Calu3 (cell line): ENCODE measurements at regions of chr17 and their contacts with region 1.

Region 1: DNA sequence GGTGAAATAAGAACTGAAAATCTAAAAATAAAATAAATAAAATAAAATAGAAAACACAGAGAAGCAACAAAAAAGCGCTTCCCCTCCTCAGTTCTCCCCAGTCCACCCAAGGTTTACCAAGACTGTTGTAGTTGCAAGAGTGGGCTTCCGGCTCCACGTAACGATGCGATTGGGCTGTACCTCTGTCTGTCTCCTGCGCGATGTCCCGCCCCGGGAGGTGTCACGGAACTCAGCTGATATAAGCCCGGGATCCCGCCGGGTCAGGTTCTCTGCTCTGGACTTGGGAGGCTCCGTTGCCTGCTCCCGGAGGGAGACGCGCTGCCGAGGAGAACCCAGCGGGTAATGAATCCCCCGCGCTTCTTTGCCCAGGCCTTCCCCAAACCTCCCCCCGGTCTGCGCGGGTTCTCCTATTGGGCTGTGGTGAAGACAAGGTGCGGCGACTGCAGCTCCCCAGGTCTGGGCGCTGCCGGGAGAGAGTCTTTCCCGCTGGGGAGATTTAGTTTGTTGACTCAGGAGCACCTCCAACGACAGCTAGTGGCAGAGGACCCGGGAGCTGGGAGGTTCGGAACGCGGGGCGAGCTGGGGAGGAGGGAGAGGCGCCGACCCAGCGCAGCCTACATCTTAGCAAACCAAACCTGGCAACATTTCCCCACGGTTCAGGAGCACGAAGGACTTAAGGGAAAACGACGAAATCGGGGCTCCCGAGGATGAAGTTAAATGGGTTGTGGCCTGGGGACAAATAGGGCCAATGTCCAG is at the start of gene SLFN5:
- DNase-seq: peak; percentile 95
- H3K4me3 Mint-ChIP-seq: peak within 1 kb of the TSS; percentile 91
- H3K27ac Mint-ChIP-seq: peak within 1 kb of the TSS; percentile 99
- H3K4me1 Mint-ChIP-seq: peaks cover 21% of the 10 kb centered on the region
- H3K27me3 Mint-ChIP-seq: no peaks in the 10 kb centered on the region
- CTCF ChIP-seq: no peak
- total RNA-seq, gene SLFN5: 104 and 141 TPM in 2 replicates

Region 2: GRCh38 chr17:35141681-35142466 is 101.1 kb before region 1 on chr17 and contains the start of gene NLE1:
- CTCF ChIA-PET with region 1: no interaction called
- intact Hi-C with region 1: loop called (anchors 5 kb)
- DNase-seq: peak; percentile 91
- H3K4me3 Mint-ChIP-seq: peak within 1 kb of the TSS; percentile 69
- H3K27ac Mint-ChIP-seq: no peak within 1 kb of the TSS
- H3K4me1 Mint-ChIP-seq: no peaks in the 10 kb centered on the region
- H3K27me3 Mint-ChIP-seq: peaks cover 19% of the 10 kb centered on the region
- CTCF ChIP-seq: peak; percentile 86
- total RNA-seq, gene NLE1: 30.0 and 33.1 TPM in 2 replicates

Region 3: DNA sequence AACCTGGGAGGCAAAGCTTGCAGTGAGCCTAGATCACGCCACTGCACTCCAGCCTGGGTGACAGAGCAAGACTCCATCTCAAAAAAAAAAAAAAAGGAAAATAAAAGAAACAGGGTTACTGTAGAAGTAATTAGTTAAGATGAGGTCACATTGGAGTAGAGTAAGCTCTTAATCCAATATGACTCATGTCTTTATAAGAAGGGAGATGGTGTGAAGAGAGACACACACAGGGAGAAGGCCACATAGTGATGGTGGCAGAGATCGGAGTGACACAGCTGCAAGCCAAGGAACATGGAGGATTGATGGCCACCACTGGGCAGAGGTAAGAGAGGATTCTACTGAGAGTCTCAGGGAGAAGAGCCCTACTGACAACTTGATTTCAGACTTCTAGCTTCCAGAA is 15.4 kb before region 1 on chr17:
- CTCF ChIA-PET with region 1: no interaction called
- intact Hi-C with region 1: no loop called
- DNase-seq: no peak
- H3K4me3 Mint-ChIP-seq: no peak overlapping the region
- H3K27ac Mint-ChIP-seq: no peak overlapping the region
- H3K4me1 Mint-ChIP-seq: no peaks in the 10 kb centered on the region
- H3K27me3 Mint-ChIP-seq: peaks cover 13% of the 10 kb centered on the region
- CTCF ChIP-seq: no peak

Region 4: DNA sequence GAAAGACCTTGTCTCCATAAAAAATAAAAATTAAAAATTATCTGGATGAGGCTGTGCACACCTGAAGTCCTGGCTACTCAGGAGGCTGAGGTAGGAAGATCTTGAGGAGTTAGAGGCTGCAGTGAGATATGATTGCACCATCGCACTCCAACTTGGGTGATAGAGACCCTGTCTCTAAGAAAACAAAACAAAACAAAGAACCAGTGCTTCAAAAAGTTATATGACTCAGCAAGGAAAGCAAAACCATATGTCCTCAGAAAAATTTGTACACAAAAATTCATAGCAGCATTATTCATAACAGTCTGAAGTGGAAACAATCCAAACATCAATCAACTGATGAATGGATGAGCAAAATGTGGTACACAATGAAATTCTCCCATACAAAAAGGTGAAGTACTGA is 48.8 kb after region 1 on chr17:
- CTCF ChIA-PET with region 1: no interaction called
- intact Hi-C with region 1: loop called (anchors 10 kb)
- DNase-seq: no peak
- H3K4me3 Mint-ChIP-seq: no peak overlapping the region
- H3K27ac Mint-ChIP-seq: no peak overlapping the region
- H3K4me1 Mint-ChIP-seq: peaks cover 9% of the 10 kb centered on the region
- H3K27me3 Mint-ChIP-seq: no peaks in the 10 kb centered on the region
- CTCF ChIP-seq: no peak

Region 5: GRCh38 chr17:35373534-35373983 is 130.6 kb after region 1 on chr17 and contains the start of gene SLFN11:
- CTCF ChIA-PET with region 1: no interaction called
- intact Hi-C with region 1: loop called (anchors 10 kb)
- DNase-seq: peak; percentile 57
- H3K4me3 Mint-ChIP-seq: peak within 1 kb of the TSS; percentile 92
- H3K27ac Mint-ChIP-seq: peak within 1 kb of the TSS; percentile 88
- H3K4me1 Mint-ChIP-seq: peaks cover 41% of the 10 kb centered on the region
- H3K27me3 Mint-ChIP-seq: no peaks in the 10 kb centered on the region
- CTCF ChIP-seq: no peak
- total RNA-seq, gene SLFN11: 35.3 and 38.2 TPM in 2 replicates

Region 6: GRCh38 chr17:35529866-35530265 is 286.9 kb after region 1 on chr17:
- CTCF ChIA-PET with region 1: interaction called, 3 read pairs
- intact Hi-C with region 1: loop called (anchors 5 kb)
- DNase-seq: no peak
- H3K4me3 Mint-ChIP-seq: no peak overlapping the region
- H3K27ac Mint-ChIP-seq: no peak overlapping the region
- H3K4me1 Mint-ChIP-seq: no peaks in the 10 kb centered on the region
- H3K27me3 Mint-ChIP-seq: peaks cover 34% of the 10 kb centered on the region
- CTCF ChIP-seq: no peak